HEK293 (cell line): ENCODE measurements at regions of chr14 and their contacts with region 1.

Region 1: GRCh38 chr14:69298131-69299071 is 38.4 kb downstream of the GALNT16 start:
- H3K4me3 ChIP-seq: no peak overlapping the region
- H3K27ac ChIP-seq: no peak overlapping the region
- H3K4me1 ChIP-seq: no peaks in the 10 kb centered on the region
- CTCF ChIP-seq: no peak

Region 2: DNA sequence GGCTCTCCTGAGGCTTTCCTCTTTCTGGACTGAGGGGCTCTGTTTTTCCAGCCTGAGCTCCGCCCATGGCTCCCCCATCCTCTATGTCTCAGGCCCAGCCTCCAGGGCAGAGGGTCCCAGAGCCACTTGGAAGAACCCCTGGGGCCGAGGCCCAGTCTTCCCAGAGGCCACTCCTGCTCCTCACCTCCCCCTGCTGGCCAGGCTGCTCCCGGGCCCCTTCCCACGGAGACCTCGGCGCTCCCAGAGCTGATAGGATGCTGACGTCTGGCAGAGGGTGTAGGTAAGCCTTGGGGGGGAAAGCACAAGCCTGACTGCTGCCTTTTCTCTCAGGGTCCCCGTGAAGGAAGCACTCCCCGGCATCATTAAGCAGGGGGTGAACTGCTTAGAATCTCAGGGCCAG is 48.3 kb after region 1 on chr14:
- CTCF ChIA-PET with region 1: interaction called, 10 read pairs
- POLR2A ChIA-PET with region 1: no interaction called
- H3K4me3 ChIP-seq: no peak overlapping the region
- H3K27ac ChIP-seq: no peak overlapping the region
- H3K4me1 ChIP-seq: no peaks in the 10 kb centered on the region
- CTCF ChIP-seq: no peak